CD4-positive, alpha-beta T cell (primary cell): ENCODE measurements at regions of chr14 and their contacts with region 1.

Region 1: DNA sequence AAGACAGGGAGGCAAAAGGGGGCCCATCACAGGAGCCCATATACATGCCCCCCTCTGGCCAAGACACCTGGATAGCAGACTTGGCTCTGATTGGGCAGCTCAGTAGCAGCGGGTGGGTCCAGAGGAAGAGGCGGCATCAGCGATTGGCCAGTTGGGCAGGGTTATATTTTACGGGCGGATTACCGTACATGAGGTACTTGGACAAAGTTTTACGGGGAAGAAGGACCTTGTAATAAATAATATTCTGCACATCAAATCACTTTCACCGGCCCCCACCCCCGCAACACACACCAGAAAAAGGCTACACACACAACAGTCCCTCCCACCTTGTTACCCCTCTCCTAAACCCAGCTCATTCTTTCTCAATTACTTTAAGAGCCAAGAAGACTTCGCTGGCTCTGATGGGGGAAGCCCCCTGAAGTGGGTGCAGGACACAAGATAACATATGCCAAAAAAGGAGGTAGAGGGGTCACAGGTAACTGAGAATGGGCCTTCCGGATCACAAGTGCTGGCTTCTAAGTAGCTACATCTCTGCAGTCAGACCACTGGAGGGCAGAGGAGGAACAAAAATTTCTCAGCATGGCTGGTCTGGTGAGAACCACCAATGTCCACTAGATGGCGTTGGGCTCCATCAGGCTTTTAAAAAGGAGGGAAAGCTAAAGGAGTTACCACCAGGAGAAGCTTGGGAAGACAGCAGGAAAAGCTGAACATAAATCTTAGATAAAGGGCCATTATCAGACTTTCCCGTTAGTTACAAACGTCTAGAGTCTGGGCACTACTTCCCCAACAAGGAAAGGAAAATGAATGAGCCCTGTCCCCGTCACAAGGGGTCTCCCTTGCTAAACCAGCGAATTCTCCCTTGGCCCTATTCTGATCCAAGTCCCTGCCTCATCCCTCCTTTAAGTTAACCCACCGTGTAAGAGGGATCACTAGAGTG is 11.4 kb upstream of the CDH24 start:
- DNase-seq: peak; percentile 54 to 90 (median 65)
- ATAC-seq: peak; percentile 73
- H3K4me3 ChIP-seq: no peak overlapping the region
- H3K4me3 Mint-ChIP-seq: peak overlapping the region; percentile 78
- H3K27ac ChIP-seq: no peak overlapping the region
- H3K27ac Mint-ChIP-seq: peak overlapping the region; percentile 63
- H3K4me1 ChIP-seq: peaks cover 36% of the 10 kb centered on the region
- H3K4me1 Mint-ChIP-seq: peaks cover 49% of the 10 kb centered on the region
- H3K27me3 ChIP-seq: no peaks in the 10 kb centered on the region
- H3K27me3 Mint-ChIP-seq: no peaks in the 10 kb centered on the region
- CTCF ChIP-seq: peak; percentile 97

Region 2: GRCh38 chr14:22973217-22974032 is 95.3 kb before region 1 on chr14:
- CTCF ChIA-PET with region 1: interaction called, 11 read pairs
- POLR2A ChIA-PET with region 1: no interaction called
- intact Hi-C with region 1: no loop called
- DNase-seq: peak in 9 of 14 experiments; percentile 14 to 73 (median 43)
- ATAC-seq: peak; percentile 69
- H3K4me3 ChIP-seq: no peak overlapping the region
- H3K4me3 Mint-ChIP-seq: no peak overlapping the region
- H3K27ac ChIP-seq: no peak overlapping the region
- H3K27ac Mint-ChIP-seq: no peak overlapping the region
- H3K4me1 ChIP-seq: no peaks in the 10 kb centered on the region
- H3K4me1 Mint-ChIP-seq: no peaks in the 10 kb centered on the region
- H3K27me3 ChIP-seq: no peaks in the 10 kb centered on the region
- H3K27me3 Mint-ChIP-seq: no peaks in the 10 kb centered on the region
- CTCF ChIP-seq: peak; percentile 75

Region 3: GRCh38 chr14:23057757-23058653 is 10.7 kb before region 1 on chr14:
- CTCF ChIA-PET with region 1: interaction called, 27 read pairs
- POLR2A ChIA-PET with region 1: interaction called, 15 read pairs
- intact Hi-C with region 1: no loop called
- DNase-seq: peak; percentile 74 to 94 (median 86)
- ATAC-seq: peak; percentile 73
- H3K4me3 ChIP-seq: peak overlapping the region; percentile 75
- H3K4me3 Mint-ChIP-seq: peak overlapping the region; percentile 90
- H3K27ac ChIP-seq: no peak overlapping the region
- H3K27ac Mint-ChIP-seq: peak overlapping the region; percentile 63
- H3K4me1 ChIP-seq: peaks cover 24% of the 10 kb centered on the region
- H3K4me1 Mint-ChIP-seq: peaks cover 18% of the 10 kb centered on the region
- H3K27me3 ChIP-seq: no peaks in the 10 kb centered on the region
- H3K27me3 Mint-ChIP-seq: no peaks in the 10 kb centered on the region
- CTCF ChIP-seq: peak; percentile 91

Region 4: DNA sequence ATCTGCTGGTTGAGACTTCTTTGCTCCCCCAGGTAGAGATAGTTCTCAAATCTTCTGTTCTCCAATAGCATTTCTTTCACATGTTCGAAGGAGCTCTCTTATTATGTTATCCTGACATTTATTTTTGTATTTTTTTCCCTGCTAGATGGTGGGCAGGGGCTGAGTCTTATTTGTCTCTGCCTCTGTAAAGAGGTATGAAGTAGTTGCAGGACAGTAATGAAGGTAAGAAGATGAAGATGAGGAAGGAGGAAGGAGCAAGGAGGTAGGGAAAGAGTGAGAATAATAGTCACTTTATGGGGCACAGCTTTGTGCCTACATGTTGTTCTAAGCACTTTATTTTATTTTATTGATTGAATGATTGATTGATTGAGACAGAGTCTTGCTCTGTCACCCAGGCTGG is 41.0 kb after region 1 on chr14:
- CTCF ChIA-PET with region 1: interaction called, 9 read pairs
- POLR2A ChIA-PET with region 1: no interaction called
- intact Hi-C with region 1: loop called (anchors 1 to 5 kb)
- DNase-seq: no peak
- ATAC-seq: no peak
- H3K4me3 ChIP-seq: no peak overlapping the region
- H3K4me3 Mint-ChIP-seq: no peak overlapping the region
- H3K27ac ChIP-seq: no peak overlapping the region
- H3K27ac Mint-ChIP-seq: no peak overlapping the region
- H3K4me1 ChIP-seq: peaks cover 3% of the 10 kb centered on the region
- H3K4me1 Mint-ChIP-seq: no peaks in the 10 kb centered on the region
- H3K27me3 ChIP-seq: peaks cover 16 to 19% of the 10 kb centered on the region in 2 experiments
- H3K27me3 Mint-ChIP-seq: no peaks in the 10 kb centered on the region
- CTCF ChIP-seq: no peak

Region 5: GRCh38 chr14:23114669-23115491 is 46.1 kb after region 1 on chr14:
- CTCF ChIA-PET with region 1: interaction called, 9 read pairs
- POLR2A ChIA-PET with region 1: interaction called, 8 read pairs
- intact Hi-C with region 1: loop called in 1 of 2 experiments (anchors 5 kb)
- DNase-seq: no peak
- ATAC-seq: no peak
- H3K4me3 ChIP-seq: no peak overlapping the region
- H3K4me3 Mint-ChIP-seq: no peak overlapping the region
- H3K27ac ChIP-seq: no peak overlapping the region
- H3K27ac Mint-ChIP-seq: peak overlapping the region; percentile 94
- H3K4me1 ChIP-seq: peaks cover 37% of the 10 kb centered on the region
- H3K4me1 Mint-ChIP-seq: peaks cover 39% of the 10 kb centered on the region
- H3K27me3 ChIP-seq: peaks cover 16 to 18% of the 10 kb centered on the region in 2 experiments
- H3K27me3 Mint-ChIP-seq: no peaks in the 10 kb centered on the region
- CTCF ChIP-seq: no peak

Region 6: DNA sequence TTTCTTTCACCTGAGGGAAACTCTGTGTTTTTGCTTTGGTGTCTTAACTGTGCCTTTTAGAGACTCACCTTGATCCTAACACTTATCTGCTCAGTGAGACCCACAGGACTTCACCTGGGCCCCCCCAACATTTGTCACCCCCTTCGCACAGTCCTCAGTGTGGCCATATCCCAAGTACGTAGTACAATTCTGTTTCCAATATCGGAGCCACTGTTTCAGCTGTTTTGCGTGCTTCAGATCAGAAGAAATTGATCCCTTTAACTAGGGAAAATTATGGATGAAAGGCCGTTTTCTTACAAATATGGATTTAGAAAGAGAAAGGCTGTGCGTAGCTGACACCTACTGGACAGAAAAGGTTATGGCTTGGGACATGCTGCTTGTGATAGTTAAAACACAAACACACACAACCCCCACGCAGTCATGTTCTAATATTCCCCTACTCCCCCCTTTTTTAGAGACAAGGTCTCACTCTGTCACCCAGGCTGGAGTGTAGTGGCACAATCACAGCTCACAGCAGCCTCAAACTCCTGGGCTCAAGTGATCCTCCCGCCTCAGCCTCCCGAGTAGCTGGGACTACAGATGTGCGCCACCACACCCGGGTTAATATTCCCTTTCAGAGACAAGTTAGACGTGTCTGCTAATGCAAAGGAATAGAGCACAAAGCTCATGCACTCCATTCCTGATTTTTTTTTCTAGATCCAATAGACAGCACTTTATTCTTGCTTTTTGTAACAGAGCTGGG is 118.3 kb after region 1 on chr14:
- CTCF ChIA-PET with region 1: interaction called, 16 read pairs
- POLR2A ChIA-PET with region 1: no interaction called
- intact Hi-C with region 1: loop called (anchors 1 to 2 kb)
- DNase-seq: peak in 7 of 14 experiments; percentile 3 to 68 (median 37)
- ATAC-seq: peak; percentile 58
- H3K4me3 ChIP-seq: no peak overlapping the region
- H3K4me3 Mint-ChIP-seq: no peak overlapping the region
- H3K27ac ChIP-seq: no peak overlapping the region
- H3K27ac Mint-ChIP-seq: no peak overlapping the region
- H3K4me1 ChIP-seq: peaks cover 15% of the 10 kb centered on the region
- H3K4me1 Mint-ChIP-seq: no peaks in the 10 kb centered on the region
- H3K27me3 ChIP-seq: peaks cover 2 to 12% of the 10 kb centered on the region in 2 experiments
- H3K27me3 Mint-ChIP-seq: no peaks in the 10 kb centered on the region
- CTCF ChIP-seq: peak; percentile 71